Upper lobe of right lung (tissue), 1 donor: ENCODE measurements at regions of chr16 and their contacts with region 1.

Region 1: DNA sequence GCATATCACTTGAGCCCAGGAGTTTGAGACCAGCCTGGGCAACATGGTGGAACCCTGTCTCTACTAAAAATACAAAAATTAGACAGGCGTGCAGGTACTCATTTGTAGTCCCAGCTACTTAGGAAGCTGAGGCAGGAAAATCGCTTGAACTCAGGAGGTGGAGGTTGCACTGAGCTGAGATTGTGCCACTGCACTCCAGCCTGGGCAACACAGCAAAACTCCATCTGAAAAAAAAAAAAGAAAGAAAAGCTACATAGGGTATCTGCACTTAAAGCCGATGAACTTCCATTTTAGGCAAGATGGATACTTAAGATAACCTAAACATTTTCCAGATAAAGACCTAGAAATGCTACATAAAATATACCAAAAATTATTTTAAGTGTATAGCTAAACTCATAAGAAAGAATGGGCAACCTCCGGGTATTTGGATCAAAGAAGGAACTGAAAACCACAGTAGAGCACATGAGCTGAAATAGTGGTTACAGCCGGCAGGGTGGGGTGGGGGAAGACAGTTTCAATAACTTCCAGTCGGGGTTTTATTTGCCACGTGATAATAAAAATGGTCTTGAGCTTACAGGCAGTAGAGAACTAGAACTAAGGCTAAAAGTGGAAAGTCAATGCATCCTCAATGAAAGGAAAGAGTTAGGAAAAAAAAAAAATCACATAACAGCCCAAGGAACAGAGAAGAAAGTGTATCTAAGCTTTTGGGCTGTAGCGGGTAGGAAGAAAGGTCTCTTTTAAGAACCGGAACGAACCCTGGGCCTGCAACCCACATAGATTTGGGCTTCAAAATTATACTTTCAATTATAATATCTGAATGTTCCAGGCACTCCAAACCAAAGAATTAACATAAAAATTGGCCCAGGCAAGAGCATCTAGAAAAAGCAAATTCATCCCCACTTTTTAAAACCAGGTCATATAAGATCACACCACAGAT is 53.1 kb downstream of the CFDP1 start:
- DNase-seq: no peak
- ATAC-seq: peak; percentile 78
- H3K4me3 ChIP-seq: no peak overlapping the region
- H3K27ac ChIP-seq: peak overlapping the region; percentile 40
- H3K4me1 ChIP-seq: peaks cover 31% of the 10 kb centered on the region
- H3K27me3 ChIP-seq: no peaks in the 10 kb centered on the region
- CTCF ChIP-seq: no peak

Region 2: DNA sequence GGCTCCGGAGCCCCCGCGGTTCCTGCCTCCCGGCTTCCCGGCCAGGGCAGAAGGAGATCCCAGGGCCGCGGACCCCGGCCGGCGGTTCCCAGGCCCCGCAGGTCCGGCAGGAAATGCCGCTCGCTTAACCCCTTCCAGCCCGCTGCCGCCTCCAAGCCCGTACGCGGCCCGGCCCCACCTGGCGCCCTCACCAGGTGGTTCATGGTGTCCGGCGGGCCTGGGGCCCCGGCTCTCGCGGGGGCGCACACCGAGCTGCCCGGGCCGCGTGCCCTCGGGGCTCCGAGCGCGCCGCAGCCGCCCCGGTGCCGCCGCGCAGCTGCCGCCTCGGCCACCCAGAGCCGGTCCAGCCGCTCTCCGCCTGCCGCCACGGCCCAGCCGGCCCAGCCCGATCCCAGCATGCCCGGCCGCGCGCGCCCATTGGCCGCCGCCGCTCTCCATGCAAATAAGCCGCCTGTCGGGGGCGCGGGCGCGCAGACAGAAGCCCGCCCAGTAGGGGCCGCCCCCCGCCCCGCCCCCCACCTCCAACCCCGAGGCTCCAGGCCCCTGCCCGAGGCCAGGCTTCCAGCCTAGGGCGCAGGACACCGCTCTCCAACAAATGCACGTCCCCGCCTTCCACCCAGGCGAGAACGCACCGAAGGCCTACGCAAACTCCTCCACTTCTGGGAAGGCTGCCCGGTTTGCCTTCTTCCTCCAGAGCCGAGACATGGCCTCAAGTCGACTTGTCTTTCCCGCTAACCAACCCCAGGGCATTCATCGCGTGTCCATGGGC is 128.7 kb before region 1 on chr16 and contains the start of gene BCAR1:
- intact Hi-C with region 1: loop called (anchors 5 kb)
- DNase-seq: peak; percentile 96
- ATAC-seq: peak; percentile 86
- H3K4me3 ChIP-seq: peak within 1 kb of the TSS; percentile 82
- H3K27ac ChIP-seq: peak within 1 kb of the TSS; percentile 90
- H3K4me1 ChIP-seq: peaks cover 87% of the 10 kb centered on the region
- H3K27me3 ChIP-seq: no peaks in the 10 kb centered on the region
- CTCF ChIP-seq: no peak
- total RNA-seq, gene BCAR1: 61.7 TPM